SK-N-SH (cell line): ENCODE measurements at regions of chr12 and their contacts with region 1.

Region 1: GRCh38 chr12:120317224-120318105 is 10.1 kb downstream of the PLA2G1B start:
- DNase-seq: peak; percentile 96
- H3K4me3 ChIP-seq: peak overlapping the region; percentile 57 to 86
- H3K27ac ChIP-seq: peak overlapping the region; percentile 40 to 72; a peak in 3 of 4 replicates
- H3K4me1 ChIP-seq: peaks cover 4 to 5% of the 10 kb centered on the region in 2 experiments; a peak in 2 of 4 replicates
- H3K27me3 ChIP-seq: no peaks in the 10 kb centered on the region
- CTCF ChIP-seq: peak; percentile 69
- EP300 ChIP-seq: no peak
- RAD21 ChIP-seq: peak; percentile 31; the same call in 1 of the 2 replicates

Region 2: GRCh38 chr12:120181991-120182631 is 135.4 kb before region 1 on chr12:
- CTCF ChIA-PET with region 1: no interaction called
- POLR2A ChIA-PET with region 1: no interaction called
- DNase-seq: no peak
- H3K4me3 ChIP-seq: no peak overlapping the region
- H3K27ac ChIP-seq: no peak overlapping the region
- H3K4me1 ChIP-seq: no peaks in the 10 kb centered on the region
- H3K27me3 ChIP-seq: no peaks in the 10 kb centered on the region
- CTCF ChIP-seq: no peak; the same call in 1 of the 2 replicates
- EP300 ChIP-seq: no peak
- RAD21 ChIP-seq: no peak

Region 3: GRCh38 chr12:120301962-120302815 is 15.3 kb before region 1 on chr12 and contains the start of gene SIRT4:
- CTCF ChIA-PET with region 1: interaction called, 57 read pairs
- POLR2A ChIA-PET with region 1: interaction called, 9 read pairs
- DNase-seq: peak; percentile 91
- H3K4me3 ChIP-seq: peak within 1 kb of the TSS; percentile 54 to 85
- H3K27ac ChIP-seq: peak within 1 kb of the TSS; percentile 58 to 70
- H3K4me1 ChIP-seq: no peaks in the 10 kb centered on the region
- H3K27me3 ChIP-seq: no peaks in the 10 kb centered on the region
- CTCF ChIP-seq: peak; percentile 92
- EP300 ChIP-seq: peak in 1 of 2 experiments; percentile 32; a peak in 1 of 4 replicates
- RAD21 ChIP-seq: peak; percentile 36; the same call in 1 of the 2 replicates
- polyA plus RNA-seq, gene SIRT4: 1.1 and 1.4 TPM in 2 replicates

Region 4: GRCh38 chr12:120327593-120327992 is 10.1 kb after region 1 on chr12 and contains the start of gene PLA2G1B:
- CTCF ChIA-PET with region 1: interaction called, 12 read pairs
- POLR2A ChIA-PET with region 1: no interaction called
- DNase-seq: no peak
- H3K4me3 ChIP-seq: no peak within 1 kb of the TSS
- H3K27ac ChIP-seq: no peak within 1 kb of the TSS
- H3K4me1 ChIP-seq: no peaks in the 10 kb centered on the region
- H3K27me3 ChIP-seq: no peaks in the 10 kb centered on the region; the same call in 1 of the 2 replicates
- CTCF ChIP-seq: no peak
- EP300 ChIP-seq: no peak
- RAD21 ChIP-seq: no peak
- polyA plus RNA-seq, gene PLA2G1B: not detected in 2 replicates

Region 5: GRCh38 chr12:120402217-120402616 is 84.8 kb after region 1 on chr12:
- CTCF ChIA-PET with region 1: no interaction called
- POLR2A ChIA-PET with region 1: no interaction called
- DNase-seq: peak; percentile 39
- H3K4me3 ChIP-seq: no peak overlapping the region
- H3K27ac ChIP-seq: no peak overlapping the region
- H3K4me1 ChIP-seq: no peaks in the 10 kb centered on the region; a peak in 1 of 4 replicates
- H3K27me3 ChIP-seq: no peaks in the 10 kb centered on the region
- CTCF ChIP-seq: no peak
- EP300 ChIP-seq: no peak
- RAD21 ChIP-seq: no peak